Heart right ventricle (tissue), 16 donors: ENCODE measurements at regions of chr18 and their contacts with region 1.

Region 1: GRCh38 chr18:23356915-23357601 is 96.0 kb upstream of the RIOK3 start:
- DNase-seq: no peak
- ATAC-seq: peak in 6 of 8 donors; percentile 12 to 45 (median 29)
- H3K4me3 ChIP-seq: peak overlapping the region in 1 of 10 donors; percentile 38
- H3K27ac ChIP-seq: peak overlapping the region; percentile 18 to 83 (median 70)
- H3K4me1 ChIP-seq: peaks cover 6 to 40% (median 25%) of the 10 kb centered on the region in 9 donors
- H3K27me3 ChIP-seq: no peaks in the 10 kb centered on the region
- CTCF ChIP-seq: no peak

Region 2: DNA sequence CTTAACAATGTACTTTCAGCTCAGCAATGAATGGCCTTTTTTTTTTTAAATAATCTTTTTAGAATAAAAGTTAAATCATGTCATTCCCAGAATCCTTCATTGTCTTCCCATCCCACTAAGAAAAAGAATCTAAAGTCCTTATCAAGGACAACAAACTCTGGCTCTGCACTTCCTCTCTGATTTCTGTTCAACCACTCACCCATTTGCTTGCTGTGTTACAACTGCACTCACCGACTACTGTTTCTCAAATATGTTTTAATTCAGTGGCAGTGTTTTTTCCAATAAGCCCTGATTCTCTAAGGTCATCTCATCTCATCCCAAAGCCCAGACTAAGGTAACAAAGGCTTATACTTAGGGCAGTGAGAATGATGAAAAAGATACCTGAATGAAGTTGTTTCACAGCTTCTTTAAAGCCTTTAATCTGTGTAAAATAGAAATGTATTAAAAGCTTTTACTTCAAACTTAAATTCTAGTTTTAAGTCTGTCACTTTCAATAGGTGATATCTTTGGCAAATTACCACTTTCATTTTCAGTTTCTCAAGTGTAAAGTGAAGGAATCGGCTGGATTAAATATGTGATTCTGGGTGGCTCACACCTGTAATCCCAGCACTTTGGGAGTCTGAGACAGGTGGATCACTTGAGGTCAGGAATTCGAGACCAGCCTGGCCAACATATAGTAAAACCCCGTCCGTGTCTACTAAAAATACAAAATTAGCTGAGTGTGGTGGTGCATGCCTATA is 336.3 kb before region 1 on chr18:
- intact Hi-C with region 1: loop called in 1 of 10 experiments (anchors 10 kb)
- DNase-seq: no peak
- ATAC-seq: no peak
- H3K4me3 ChIP-seq: no peak overlapping the region
- H3K27ac ChIP-seq: peak overlapping the region in 1 of 10 donors; percentile 33
- H3K4me1 ChIP-seq: peaks cover 0 to 8% (median 0%) of the 10 kb centered on the region in 9 donors
- H3K27me3 ChIP-seq: no peaks in the 10 kb centered on the region
- CTCF ChIP-seq: no peak

Region 3: DNA sequence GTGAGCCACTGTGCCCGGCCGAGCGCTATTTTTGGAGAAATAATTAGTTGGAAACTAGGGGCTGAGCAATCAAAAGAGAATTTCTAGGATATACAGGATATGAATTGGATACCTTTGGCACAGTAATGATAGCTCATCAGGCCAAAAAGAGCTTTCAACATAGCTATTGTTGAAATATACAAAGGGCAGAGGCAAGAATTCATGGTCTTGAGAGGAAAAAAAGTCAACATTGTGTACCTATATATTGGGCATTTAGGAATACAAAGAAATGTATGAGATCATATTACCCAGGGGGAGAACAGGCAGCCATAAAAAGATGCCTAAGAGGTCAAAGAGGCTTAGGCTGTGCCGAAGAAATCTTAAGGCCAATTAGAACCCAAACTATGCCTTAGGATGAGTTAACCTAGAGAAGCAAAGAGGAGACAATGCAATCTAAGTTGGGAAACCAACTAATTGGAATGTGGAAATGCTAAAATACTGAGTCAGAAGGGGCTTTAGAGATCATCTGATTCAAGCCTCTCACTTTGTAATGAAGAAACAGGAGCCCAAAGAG is 325.0 kb before region 1 on chr18:
- intact Hi-C with region 1: loop called in 2 of 10 experiments (anchors 5 to 10 kb)
- DNase-seq: no peak
- ATAC-seq: no peak
- H3K4me3 ChIP-seq: no peak overlapping the region
- H3K27ac ChIP-seq: peak overlapping the region in 1 of 10 donors; percentile 15
- H3K4me1 ChIP-seq: peaks cover 0 to 13% (median 0%) of the 10 kb centered on the region in 9 donors
- H3K27me3 ChIP-seq: no peaks in the 10 kb centered on the region
- CTCF ChIP-seq: no peak

Region 4: DNA sequence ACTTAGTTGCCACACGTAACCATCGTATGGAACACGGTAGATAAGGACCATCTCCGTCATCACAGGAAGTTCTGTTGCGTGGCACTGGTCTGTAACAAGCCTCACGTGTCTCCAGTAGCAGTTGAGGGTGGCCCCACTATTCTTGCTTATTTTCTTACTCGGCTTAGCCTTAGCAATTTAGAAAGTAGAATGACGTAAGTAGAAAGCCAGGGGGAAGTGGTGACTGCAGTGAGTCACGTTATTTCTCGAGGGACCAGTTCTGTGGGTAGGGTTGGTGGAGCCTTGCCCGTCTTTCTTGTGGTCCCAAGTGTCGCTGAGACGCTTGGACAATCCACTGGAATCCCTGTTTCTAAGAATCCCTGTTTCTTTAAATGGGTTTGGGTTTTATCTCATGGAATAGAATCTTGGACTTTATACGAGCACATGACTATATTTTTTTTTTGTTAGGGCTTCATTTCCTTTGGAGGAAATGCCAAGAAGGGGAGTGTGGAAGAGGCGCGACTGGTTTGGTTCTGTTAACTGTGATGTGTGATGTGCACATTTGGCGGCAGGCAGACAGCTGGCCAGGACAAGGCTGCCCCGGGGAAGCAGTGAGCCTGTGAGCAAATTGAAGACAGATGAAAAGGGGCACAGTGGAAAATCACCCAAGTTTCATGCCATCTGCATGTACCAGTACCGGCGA is 125.6 kb before region 1 on chr18:
- intact Hi-C with region 1: loop called in 5 of 10 experiments (anchors 1 to 10 kb)
- DNase-seq: peak; percentile 43 to 77
- ATAC-seq: peak; percentile 72 to 89 (median 78)
- H3K4me3 ChIP-seq: no peak overlapping the region
- H3K27ac ChIP-seq: peak overlapping the region in 9 of 10 donors; percentile 47 to 88 (median 75)
- H3K4me1 ChIP-seq: peaks cover 9 to 61% (median 42%) of the 10 kb centered on the region in 9 donors
- H3K27me3 ChIP-seq: no peaks in the 10 kb centered on the region
- CTCF ChIP-seq: no peak

Region 5: DNA sequence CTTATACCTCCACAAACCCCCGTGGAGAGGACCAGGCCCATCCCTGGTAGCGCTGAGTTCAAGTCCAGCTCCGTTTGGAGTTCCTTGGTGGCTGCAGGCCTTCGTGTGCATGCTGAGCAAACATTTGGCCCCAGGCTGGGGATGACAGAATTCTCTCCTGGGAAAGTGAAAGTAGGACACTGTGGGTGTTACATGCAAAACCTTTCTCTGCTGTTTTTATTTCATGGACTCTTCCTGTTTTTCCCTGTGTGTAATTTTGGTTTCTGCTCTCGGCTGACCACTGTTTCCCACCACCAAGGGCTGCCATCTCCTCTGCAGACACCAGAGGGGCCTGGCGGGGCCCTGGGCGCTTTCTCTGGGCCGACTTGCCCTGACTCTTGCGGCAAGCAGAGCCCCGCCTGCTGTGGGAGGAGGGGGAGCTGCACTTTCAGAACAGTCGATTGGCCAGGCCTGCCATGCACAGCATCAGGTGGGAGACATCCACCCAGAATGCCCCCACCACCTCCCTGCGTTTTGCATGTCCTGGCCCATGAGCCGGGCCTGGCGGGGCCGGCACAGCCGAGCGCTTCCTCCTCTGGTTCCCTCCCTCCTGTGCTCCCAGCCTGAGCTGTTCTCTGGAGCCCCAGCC is 119.4 kb before region 1 on chr18:
- intact Hi-C with region 1: loop called in 4 of 10 experiments (anchors 5 to 10 kb)
- DNase-seq: peak; percentile 53 to 54
- ATAC-seq: peak; percentile 70 to 85 (median 80)
- H3K4me3 ChIP-seq: peak overlapping the region; percentile 12 to 48 (median 32)
- H3K27ac ChIP-seq: peak overlapping the region; percentile 51 to 84 (median 80)
- H3K4me1 ChIP-seq: peaks cover 12 to 23% (median 21%) of the 10 kb centered on the region in 9 donors
- H3K27me3 ChIP-seq: no peaks in the 10 kb centered on the region
- CTCF ChIP-seq: peak in 5 of 9 donors; percentile 14 to 39 (median 31)

Region 6: GRCh38 chr18:23259701-23260582 is 97.1 kb before region 1 on chr18:
- intact Hi-C with region 1: loop called in 1 of 10 experiments (anchors 10 kb)
- DNase-seq: peak; percentile 80 to 81
- ATAC-seq: peak; percentile 80 to 89 (median 85)
- H3K4me3 ChIP-seq: peak overlapping the region in 9 of 10 donors; percentile 1 to 39 (median 32)
- H3K27ac ChIP-seq: peak overlapping the region; percentile 8 to 86 (median 66)
- H3K4me1 ChIP-seq: peaks cover 10 to 38% (median 26%) of the 10 kb centered on the region in 9 donors
- H3K27me3 ChIP-seq: no peaks in the 10 kb centered on the region
- CTCF ChIP-seq: no peak

Region 7: GRCh38 chr18:23276451-23276850 is 80.6 kb before region 1 on chr18:
- intact Hi-C with region 1: loop called in 3 of 10 experiments (anchors 5 to 10 kb)
- DNase-seq: peak; percentile 37 to 47
- ATAC-seq: peak; percentile 86 to 97 (median 93)
- H3K4me3 ChIP-seq: no peak overlapping the region
- H3K27ac ChIP-seq: peak overlapping the region in 7 of 10 donors; percentile 20 to 62 (median 52)
- H3K4me1 ChIP-seq: peaks cover 0 to 14% (median 3%) of the 10 kb centered on the region in 9 donors
- H3K27me3 ChIP-seq: no peaks in the 10 kb centered on the region
- CTCF ChIP-seq: peak in 3 of 9 donors; percentile 20 to 33 (median 29)

Region 8: GRCh38 chr18:23416298-23416697 is 59.2 kb after region 1 on chr18:
- intact Hi-C with region 1: no loop called
- DNase-seq: no peak
- ATAC-seq: peak in 7 of 8 donors; percentile 21 to 66 (median 31)
- H3K4me3 ChIP-seq: no peak overlapping the region
- H3K27ac ChIP-seq: peak overlapping the region in 2 of 10 donors; percentile 10 to 44
- H3K4me1 ChIP-seq: peaks cover 0 to 14% (median 0%) of the 10 kb centered on the region in 9 donors
- H3K27me3 ChIP-seq: no peaks in the 10 kb centered on the region
- CTCF ChIP-seq: no peak